ENCODE measurements at regions of chr1 and their contacts with region 1.

Region 1: GRCh38 chr1:170881268-170882265 is 53.8 kb upstream of the MROH9 start:
- DNase-seq: peak in 1 of 2 experiments; percentile 13
- H3K4me3 ChIP-seq: no peak overlapping the region
- H3K4me3 Mint-ChIP-seq: no peak overlapping the region
- H3K27ac Mint-ChIP-seq: no peak overlapping the region
- H3K4me1 ChIP-seq: peaks cover 8% of the 10 kb centered on the region
- H3K4me1 Mint-ChIP-seq: no peaks in the 10 kb centered on the region
- H3K27me3 ChIP-seq: no peaks in the 10 kb centered on the region
- H3K27me3 Mint-ChIP-seq: peaks cover 2% of the 10 kb centered on the region
- CTCF ChIP-seq: peak; percentile 30 to 36

Region 2: DNA sequence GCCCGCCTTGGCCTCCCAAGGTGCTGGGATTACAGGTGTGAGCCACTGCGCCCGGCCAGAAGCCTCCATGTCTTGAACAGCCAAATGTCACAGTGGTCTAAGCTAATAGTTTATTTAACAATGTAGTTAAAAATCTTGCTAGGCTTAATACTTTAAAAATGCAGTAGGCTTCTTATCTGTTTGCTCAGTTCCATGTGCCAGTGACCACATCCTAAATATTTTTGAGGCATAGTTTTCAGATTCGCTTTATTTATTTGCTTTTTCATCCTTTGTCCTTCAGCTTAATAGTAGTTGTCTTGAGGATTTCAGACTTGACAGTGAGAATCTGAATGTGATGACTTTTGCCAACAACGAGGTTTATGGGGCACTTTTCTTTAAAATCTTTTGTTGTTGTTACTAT is 277.5 kb before region 1 on chr1:
- CTCF ChIA-PET with region 1: no interaction called
- POLR2A ChIA-PET with region 1: no interaction called
- intact Hi-C with region 1: no loop called
- DNase-seq: no peak
- H3K4me3 ChIP-seq: no peak overlapping the region
- H3K4me3 Mint-ChIP-seq: no peak overlapping the region
- H3K27ac Mint-ChIP-seq: no peak overlapping the region
- H3K4me1 ChIP-seq: no peaks in the 10 kb centered on the region
- H3K4me1 Mint-ChIP-seq: no peaks in the 10 kb centered on the region
- H3K27me3 ChIP-seq: no peaks in the 10 kb centered on the region
- H3K27me3 Mint-ChIP-seq: no peaks in the 10 kb centered on the region
- CTCF ChIP-seq: no peak

Region 3: GRCh38 chr1:170692866-170693575 is 188.5 kb before region 1 on chr1:
- CTCF ChIA-PET with region 1: no interaction called
- POLR2A ChIA-PET with region 1: no interaction called
- intact Hi-C with region 1: loop called (anchors 1 kb)
- DNase-seq: no peak
- H3K4me3 ChIP-seq: no peak overlapping the region
- H3K4me3 Mint-ChIP-seq: no peak overlapping the region
- H3K27ac Mint-ChIP-seq: no peak overlapping the region
- H3K4me1 ChIP-seq: 0 out of 2 replicates have a peak, but pooled peaks cover 4% of the 10 kb centered on the region
- H3K4me1 Mint-ChIP-seq: peaks cover 5% of the 10 kb centered on the region
- H3K27me3 ChIP-seq: no peaks in the 10 kb centered on the region
- H3K27me3 Mint-ChIP-seq: peaks cover 13% of the 10 kb centered on the region
- CTCF ChIP-seq: no peak

Region 4: GRCh38 chr1:170893655-170894297 is 12.2 kb after region 1 on chr1:
- CTCF ChIA-PET with region 1: no interaction called
- POLR2A ChIA-PET with region 1: no interaction called
- intact Hi-C with region 1: no loop called
- DNase-seq: no peak
- H3K4me3 ChIP-seq: no peak overlapping the region
- H3K4me3 Mint-ChIP-seq: no peak overlapping the region
- H3K27ac Mint-ChIP-seq: no peak overlapping the region
- H3K4me1 ChIP-seq: no peaks in the 10 kb centered on the region
- H3K4me1 Mint-ChIP-seq: no peaks in the 10 kb centered on the region
- H3K27me3 ChIP-seq: no peaks in the 10 kb centered on the region
- H3K27me3 Mint-ChIP-seq: peaks cover 3% of the 10 kb centered on the region
- CTCF ChIP-seq: no peak

Region 5: GRCh38 chr1:170929835-170930554 is 48.4 kb after region 1 on chr1:
- CTCF ChIA-PET with region 1: no interaction called
- POLR2A ChIA-PET with region 1: no interaction called
- intact Hi-C with region 1: no loop called
- DNase-seq: peak in 1 of 2 experiments; percentile 50
- H3K4me3 ChIP-seq: no peak overlapping the region
- H3K4me3 Mint-ChIP-seq: no peak overlapping the region
- H3K27ac Mint-ChIP-seq: no peak overlapping the region
- H3K4me1 ChIP-seq: no peaks in the 10 kb centered on the region
- H3K4me1 Mint-ChIP-seq: no peaks in the 10 kb centered on the region
- H3K27me3 ChIP-seq: no peaks in the 10 kb centered on the region
- H3K27me3 Mint-ChIP-seq: no peaks in the 10 kb centered on the region
- CTCF ChIP-seq: peak; percentile 55 to 74

Measured in Caco-2 (cell line).